ENCODE measurements at regions of chr3 and their contacts with region 1.

Region 1: GRCh38 chr3:38117748-38118420 is 19.0 kb downstream of the ACAA1 start:
- DNase-seq: peak; percentile 71
- ATAC-seq: peak; percentile 84
- H3K4me3 ChIP-seq: no peak overlapping the region
- H3K4me3 Mint-ChIP-seq: no peak overlapping the region
- H3K27ac ChIP-seq: no peak overlapping the region
- H3K27ac Mint-ChIP-seq: no peak overlapping the region
- H3K4me1 ChIP-seq: peaks cover 19 to 23% of the 10 kb centered on the region in 2 donors
- H3K4me1 Mint-ChIP-seq: peaks cover 22% of the 10 kb centered on the region
- H3K27me3 ChIP-seq: no peaks in the 10 kb centered on the region
- H3K27me3 Mint-ChIP-seq: peaks cover 7% of the 10 kb centered on the region
- CTCF ChIP-seq: peak; percentile 81

Region 2: DNA sequence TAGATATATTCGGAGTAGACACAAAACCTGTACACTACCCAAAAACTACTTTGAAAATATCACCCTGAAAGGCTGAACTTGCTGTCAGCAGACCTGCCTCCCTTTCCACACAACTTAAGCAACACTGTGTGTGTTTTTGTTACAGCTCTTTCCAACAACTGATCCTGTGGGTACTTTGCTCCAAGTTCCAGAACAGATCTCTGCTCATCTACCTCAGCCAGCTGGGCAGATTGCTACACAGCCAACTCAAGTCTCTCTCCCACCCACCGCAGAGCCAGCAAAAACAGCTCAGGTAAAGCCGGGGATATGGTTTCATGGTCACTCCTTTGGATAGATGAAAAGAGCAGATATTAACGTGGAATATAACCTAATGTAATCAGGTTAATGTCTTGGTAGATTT is 128.0 kb after region 1 on chr3:
- CTCF ChIA-PET with region 1: no interaction called
- POLR2A ChIA-PET with region 1: no interaction called
- intact Hi-C with region 1: no loop called
- DNase-seq: no peak
- ATAC-seq: no peak
- H3K4me3 ChIP-seq: no peak overlapping the region
- H3K4me3 Mint-ChIP-seq: no peak overlapping the region
- H3K27ac ChIP-seq: no peak overlapping the region
- H3K27ac Mint-ChIP-seq: no peak overlapping the region
- H3K4me1 ChIP-seq: no peaks in the 10 kb centered on the region
- H3K4me1 Mint-ChIP-seq: no peaks in the 10 kb centered on the region
- H3K27me3 ChIP-seq: no peaks in the 10 kb centered on the region
- H3K27me3 Mint-ChIP-seq: no peaks in the 10 kb centered on the region
- CTCF ChIP-seq: no peak

Region 3: GRCh38 chr3:38297947-38298711 is 180.2 kb after region 1 on chr3:
- CTCF ChIA-PET with region 1: interaction called, 55 read pairs
- POLR2A ChIA-PET with region 1: no interaction called
- intact Hi-C with region 1: no loop called
- DNase-seq: peak; percentile 29
- ATAC-seq: no peak
- H3K4me3 ChIP-seq: no peak overlapping the region
- H3K4me3 Mint-ChIP-seq: no peak overlapping the region
- H3K27ac ChIP-seq: no peak overlapping the region
- H3K27ac Mint-ChIP-seq: no peak overlapping the region
- H3K4me1 ChIP-seq: no peaks in the 10 kb centered on the region
- H3K4me1 Mint-ChIP-seq: no peaks in the 10 kb centered on the region
- H3K27me3 ChIP-seq: no peaks in the 10 kb centered on the region
- H3K27me3 Mint-ChIP-seq: peaks cover 16% of the 10 kb centered on the region
- CTCF ChIP-seq: peak; percentile 66